ENCODE measurements at regions of chr1 and their contacts with region 1.

Region 1: GRCh38 chr1:32992489-32993323 is 28.1 kb upstream of the RNF19B start:
- DNase-seq: no peak
- ATAC-seq: peak; percentile 76
- H3K4me3 ChIP-seq: no peak overlapping the region
- H3K27ac ChIP-seq: no peak overlapping the region
- H3K4me1 ChIP-seq: peaks cover 9% of the 10 kb centered on the region; the same call in 1 of the 2 replicates
- H3K27me3 ChIP-seq: no peaks in the 10 kb centered on the region
- CTCF ChIP-seq: no peak

Region 2: GRCh38 chr1:32891241-32891570 is 101.5 kb before region 1 on chr1:
- CTCF ChIA-PET with region 1: interaction called, 14 read pairs
- POLR2A ChIA-PET with region 1: no interaction called
- in situ Hi-C with region 1: no loop called
- intact Hi-C with region 1: no loop called
- DNase-seq: no peak
- ATAC-seq: no peak
- H3K4me3 ChIP-seq: no peak overlapping the region
- H3K27ac ChIP-seq: no peak overlapping the region
- H3K4me1 ChIP-seq: peaks cover 7% of the 10 kb centered on the region; the same call in 1 of the 2 replicates
- H3K27me3 ChIP-seq: no peaks in the 10 kb centered on the region; the same call in 1 of the 2 replicates
- CTCF ChIP-seq: no peak

Region 3: GRCh38 chr1:33036526-33037503 is 44.1 kb after region 1 on chr1 and contains the start of gene AK2:
- CTCF ChIA-PET with region 1: interaction called, 4 read pairs
- POLR2A ChIA-PET with region 1: interaction called, 10 read pairs
- in situ Hi-C with region 1: no loop called
- intact Hi-C with region 1: no loop called
- DNase-seq: peak; percentile 97
- ATAC-seq: peak; percentile 99
- H3K4me3 ChIP-seq: peak within 1 kb of the TSS; percentile 94 to 99
- H3K27ac ChIP-seq: peak within 1 kb of the TSS; percentile 97
- H3K4me1 ChIP-seq: peaks cover 11% of the 10 kb centered on the region
- H3K27me3 ChIP-seq: no peaks in the 10 kb centered on the region
- CTCF ChIP-seq: no peak
- total RNA-seq, gene AK2: 213 TPM

Region 4: DNA sequence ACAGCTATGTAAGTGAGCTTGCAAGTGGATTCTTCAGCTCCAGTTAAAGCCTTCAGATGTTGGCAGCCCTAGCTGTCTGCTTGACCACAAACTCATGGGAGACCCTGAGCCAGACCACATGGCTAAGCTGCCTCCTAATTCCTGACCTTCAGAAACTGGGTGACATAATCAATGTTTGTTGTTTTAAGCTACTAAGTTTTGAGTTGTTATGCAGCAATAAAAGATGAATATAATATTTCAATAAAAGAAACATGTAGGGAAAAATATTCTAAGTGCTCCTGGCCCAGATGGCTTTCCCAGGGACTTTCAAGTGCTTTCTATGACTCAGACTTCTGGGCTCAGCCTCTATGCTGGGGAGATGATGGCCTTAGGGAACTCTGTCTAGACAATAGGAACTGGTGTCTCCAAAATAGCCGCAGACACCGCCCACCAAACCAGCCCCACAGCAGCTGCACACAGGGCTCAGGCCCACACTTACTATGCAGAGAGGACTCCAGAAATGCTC is 67.9 kb after region 1 on chr1:
- CTCF ChIA-PET with region 1: interaction called, 10 read pairs
- POLR2A ChIA-PET with region 1: interaction called, 7 read pairs
- in situ Hi-C with region 1: no loop called
- intact Hi-C with region 1: no loop called
- DNase-seq: no peak
- ATAC-seq: 0 out of 2 replicates have a peak, but pooled peaks have one; percentile 51
- H3K4me3 ChIP-seq: no peak overlapping the region
- H3K27ac ChIP-seq: no peak overlapping the region
- H3K4me1 ChIP-seq: 0 out of 2 replicates have a peak, but pooled peaks cover under 1% of the 10 kb centered on the region
- H3K27me3 ChIP-seq: no peaks in the 10 kb centered on the region
- CTCF ChIP-seq: no peak